ENCODE measurements at regions of chr17 and their contacts with region 1.

Region 1: DNA sequence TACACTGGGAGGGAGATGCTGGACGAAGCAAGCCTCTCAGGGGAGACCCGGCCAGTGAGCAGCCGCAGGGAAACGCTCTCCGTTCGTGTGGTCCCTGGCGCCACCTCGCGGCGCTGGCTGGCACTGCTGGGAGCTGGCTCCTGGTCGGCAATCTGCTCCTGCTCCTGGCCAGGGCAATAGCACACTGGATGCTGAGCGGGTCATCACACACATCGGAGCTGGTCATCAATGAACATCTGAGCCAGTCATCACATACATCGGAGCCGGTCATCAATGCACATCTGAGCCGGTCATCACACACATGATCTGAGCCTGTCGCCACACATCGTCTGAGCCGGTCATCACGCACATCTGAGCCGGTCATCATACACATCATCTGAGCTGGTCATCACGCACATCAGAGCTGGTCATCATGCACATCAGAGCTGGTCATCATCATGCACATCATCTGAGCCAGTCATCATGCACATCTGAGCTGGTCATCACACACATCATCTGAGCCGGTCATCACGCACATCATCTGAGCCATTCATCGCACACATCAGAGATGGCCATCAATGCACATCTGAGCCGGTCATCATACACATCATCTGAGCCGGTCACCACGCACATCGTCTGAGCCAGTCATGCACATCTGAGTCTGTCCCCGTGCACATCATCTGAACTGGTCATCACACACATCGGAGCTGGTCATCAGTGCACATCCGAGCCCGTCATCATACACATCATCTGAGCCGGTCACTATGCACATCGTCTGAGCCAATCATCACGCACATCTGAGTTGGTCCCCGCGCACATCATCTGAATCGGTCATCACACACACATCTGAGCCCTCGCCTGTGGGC is 217.3 kb downstream of the RBFOX3 start:
- DNase-seq: peak; percentile 30 to 75 (median 59)
- ATAC-seq: peak; percentile 75
- H3K4me3 ChIP-seq: no peak overlapping the region
- H3K4me3 Mint-ChIP-seq: no peak overlapping the region
- H3K27ac ChIP-seq: no peak overlapping the region
- H3K27ac Mint-ChIP-seq: no peak overlapping the region
- H3K4me1 ChIP-seq: no peaks in the 10 kb centered on the region
- H3K4me1 Mint-ChIP-seq: peaks cover 0 to 10% (median 5%) of the 10 kb centered on the region in 7 donors
- H3K27me3 ChIP-seq: peaks cover 0 to 11% of the 10 kb centered on the region in 2 donors
- H3K27me3 Mint-ChIP-seq: peaks cover 23 to 70% (median 51%) of the 10 kb centered on the region in 5 donors

Region 2: DNA sequence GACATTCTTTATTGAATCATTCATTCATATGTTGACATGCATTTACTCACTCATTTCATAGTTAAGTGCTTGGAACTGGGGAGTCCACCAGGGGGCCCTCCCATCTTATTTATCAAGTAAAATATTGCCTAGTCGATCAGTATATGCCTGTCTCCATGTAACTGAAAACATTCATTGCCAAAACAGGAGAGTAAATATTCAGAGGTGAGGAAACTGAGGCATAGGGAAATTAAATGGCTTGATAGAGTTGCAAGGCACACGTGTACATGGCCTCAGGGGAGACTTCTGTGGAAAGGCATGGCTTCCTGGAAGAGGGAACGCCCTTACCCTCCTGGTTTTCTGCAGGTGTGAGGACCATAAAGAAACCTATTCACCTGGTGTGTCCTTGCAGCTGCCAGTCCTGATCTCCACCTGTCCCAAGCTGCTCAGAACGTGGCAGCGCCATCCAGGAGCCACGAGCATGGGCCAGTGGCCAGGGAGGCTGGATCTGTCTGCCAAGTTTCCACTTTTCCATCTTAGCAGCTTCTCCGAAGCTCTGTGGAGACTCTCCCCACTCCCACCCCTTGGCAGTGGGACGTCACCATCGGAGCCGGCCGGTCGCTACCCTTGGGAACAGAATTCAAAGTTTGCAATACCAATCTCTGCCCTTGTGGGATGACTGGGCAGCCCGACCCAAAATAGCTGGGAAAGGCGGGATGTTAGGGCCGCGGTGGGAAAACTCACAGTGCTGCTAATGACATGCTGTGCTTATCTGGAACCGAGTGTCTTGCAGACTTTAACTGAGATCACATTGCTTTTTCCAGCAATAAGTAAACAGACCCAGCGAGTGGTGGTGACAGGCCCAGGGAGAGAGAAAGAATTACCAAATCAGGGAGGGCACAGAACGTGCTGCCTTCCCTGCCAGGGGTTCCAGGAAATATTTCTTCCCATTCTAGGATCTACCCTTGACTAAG is 373.7 kb before region 1 on chr17:
- CTCF ChIA-PET with region 1: interaction called, 4 read pairs
- POLR2A ChIA-PET with region 1: no interaction called
- intact Hi-C with region 1: loop called in 1 of 2 experiments (anchors 1 kb)
- DNase-seq: peak in 7 of 9 donors; percentile 26 to 66 (median 47)
- ATAC-seq: peak; percentile 63
- H3K4me3 ChIP-seq: no peak overlapping the region
- H3K4me3 Mint-ChIP-seq: no peak overlapping the region
- H3K27ac ChIP-seq: no peak overlapping the region
- H3K27ac Mint-ChIP-seq: no peak overlapping the region
- H3K4me1 ChIP-seq: peaks cover 3 to 4% of the 10 kb centered on the region in 2 donors
- H3K4me1 Mint-ChIP-seq: peaks cover 0 to 9% (median 6%) of the 10 kb centered on the region in 7 donors
- H3K27me3 ChIP-seq: no peaks in the 10 kb centered on the region
- H3K27me3 Mint-ChIP-seq: peaks cover 4 to 60% (median 13%) of the 10 kb centered on the region in 5 donors

Region 3: GRCh38 chr17:79065105-79065670 is 328.4 kb before region 1 on chr17:
- CTCF ChIA-PET with region 1: interaction called, 19 read pairs
- POLR2A ChIA-PET with region 1: no interaction called
- intact Hi-C with region 1: loop called in 1 of 2 experiments (anchors 5 kb)
- DNase-seq: peak in 7 of 9 donors; percentile 28 to 69 (median 59)
- ATAC-seq: peak; percentile 78
- H3K4me3 ChIP-seq: no peak overlapping the region
- H3K4me3 Mint-ChIP-seq: peak overlapping the region in 3 of 10 donors; percentile 11 to 47 (median 44)
- H3K27ac ChIP-seq: no peak overlapping the region
- H3K27ac Mint-ChIP-seq: peak overlapping the region in 2 of 9 donors; percentile 4 to 34
- H3K4me1 ChIP-seq: peaks cover 0 to 4% of the 10 kb centered on the region in 2 donors
- H3K4me1 Mint-ChIP-seq: peaks cover 0 to 5% (median 4%) of the 10 kb centered on the region in 7 donors
- H3K27me3 ChIP-seq: no peaks in the 10 kb centered on the region
- H3K27me3 Mint-ChIP-seq: peaks cover 0 to 4% (median 0%) of the 10 kb centered on the region in 5 donors

Region 4: DNA sequence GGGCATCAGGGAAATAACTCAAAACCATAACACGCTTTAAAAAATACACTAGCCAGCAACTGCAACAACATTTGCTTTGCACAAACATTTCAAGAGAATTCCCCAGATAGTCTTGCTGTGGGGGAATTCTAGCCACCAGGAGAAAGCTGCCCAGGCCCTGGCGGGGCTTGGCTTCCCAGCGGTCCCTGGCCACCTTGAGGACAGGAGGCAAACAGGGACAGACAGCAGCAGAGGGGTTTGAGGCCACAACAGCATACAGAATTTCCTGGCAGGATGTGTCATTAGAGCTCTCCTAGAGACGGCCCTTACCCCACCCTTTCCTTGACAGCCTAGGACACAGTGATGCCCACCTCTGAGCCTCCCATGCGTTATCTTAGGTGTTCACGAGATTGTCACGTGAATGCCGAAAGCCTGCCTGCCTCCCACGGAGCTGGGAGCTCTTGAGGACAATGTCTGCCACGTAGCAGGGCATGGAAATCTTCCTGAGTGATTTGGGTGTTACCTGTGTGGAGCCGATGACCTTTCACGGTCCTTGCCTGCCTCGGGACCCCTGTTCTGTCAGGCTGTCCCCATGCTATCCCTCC is 102.9 kb after region 1 on chr17:
- CTCF ChIA-PET with region 1: no interaction called
- POLR2A ChIA-PET with region 1: no interaction called
- intact Hi-C with region 1: no loop called
- DNase-seq: no peak
- ATAC-seq: no peak
- H3K4me3 ChIP-seq: no peak overlapping the region
- H3K4me3 Mint-ChIP-seq: no peak overlapping the region
- H3K27ac ChIP-seq: no peak overlapping the region
- H3K27ac Mint-ChIP-seq: no peak overlapping the region
- H3K4me1 ChIP-seq: no peaks in the 10 kb centered on the region
- H3K4me1 Mint-ChIP-seq: no peaks in the 10 kb centered on the region
- H3K27me3 ChIP-seq: no peaks in the 10 kb centered on the region
- H3K27me3 Mint-ChIP-seq: peaks cover 0 to 17% (median 11%) of the 10 kb centered on the region in 5 donors